Activated CD8-positive, alpha-beta memory T cell treated with anti-CD3 and anti-CD28 coated beads, Interleukin-2, amount 10 ng/mL, durations not matched to agents 7 days and 5 days (primary cell): ENCODE measurements at regions of chr1 and their contacts with region 1.

Region 1: DNA sequence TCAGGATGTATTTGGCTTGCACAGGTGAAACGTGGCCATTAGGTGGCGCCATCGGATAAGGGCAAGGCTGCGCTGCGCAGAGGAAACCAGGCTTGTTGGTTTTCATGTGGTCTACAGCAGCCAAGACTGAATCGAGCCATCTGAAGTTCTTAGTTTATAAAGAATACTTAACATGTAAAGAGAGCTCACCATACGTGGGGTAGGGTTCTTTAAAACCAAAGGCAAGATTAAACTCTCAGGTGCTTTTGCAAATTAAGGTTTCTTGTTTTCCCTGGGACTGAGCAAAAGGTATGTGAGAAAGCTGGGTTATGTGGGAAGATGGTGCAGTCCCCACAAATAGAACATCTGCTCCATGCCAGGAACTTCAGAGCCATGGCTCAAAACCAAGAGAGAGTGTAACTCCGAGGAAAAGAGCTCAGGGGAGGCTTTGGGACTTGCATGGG is 9.3 kb downstream of the MASP2 start:
- DNase-seq: peak; percentile 92
- ATAC-seq: peak; percentile 97
- H3K4me3 Mint-ChIP-seq: no peak overlapping the region
- H3K27ac Mint-ChIP-seq: no peak overlapping the region
- H3K4me1 Mint-ChIP-seq: peaks cover 9% of the 10 kb centered on the region
- H3K27me3 Mint-ChIP-seq: peaks cover 5% of the 10 kb centered on the region

Region 2: GRCh38 chr1:11052839-11053757 is 15.3 kb after region 1 on chr1:
- CTCF ChIA-PET with region 1: interaction called, 48 read pairs
- DNase-seq: no peak
- ATAC-seq: no peak
- H3K4me3 Mint-ChIP-seq: no peak overlapping the region
- H3K27ac Mint-ChIP-seq: no peak overlapping the region
- H3K4me1 Mint-ChIP-seq: peaks cover 22% of the 10 kb centered on the region
- H3K27me3 Mint-ChIP-seq: no peaks in the 10 kb centered on the region

Region 3: DNA sequence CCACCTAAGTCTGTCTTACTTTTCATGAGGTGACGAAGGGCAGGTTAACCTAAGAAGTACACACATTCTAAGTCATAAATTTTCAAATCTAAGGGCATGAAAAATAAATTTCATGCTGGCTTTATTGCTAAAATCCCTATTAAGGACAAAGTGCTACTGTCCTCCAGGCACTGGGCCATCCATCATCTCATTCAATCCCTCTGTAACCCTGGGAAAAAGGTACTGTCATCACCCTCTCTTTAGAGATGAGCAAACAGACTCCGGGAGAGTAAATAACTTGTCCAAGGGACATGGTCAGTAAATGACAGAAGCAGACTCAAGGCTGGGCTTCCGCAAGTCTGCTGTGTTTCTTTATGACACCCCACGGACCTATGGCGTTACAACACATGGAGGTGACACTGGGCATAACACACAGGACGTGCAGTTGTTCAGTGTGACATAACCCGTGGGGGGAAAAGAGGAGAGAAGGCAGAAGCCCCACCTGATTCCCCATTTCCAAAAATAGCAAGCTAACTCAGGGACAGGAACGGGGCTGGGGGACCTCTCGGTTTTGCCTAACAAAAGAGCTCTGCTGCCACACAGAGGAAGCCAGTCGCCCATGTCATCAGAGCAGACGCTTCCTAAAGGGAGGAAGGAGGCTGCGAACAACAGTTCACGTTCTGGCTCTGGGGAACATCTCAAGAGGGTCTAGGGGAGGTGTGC is 34.6 kb after region 1 on chr1:
- CTCF ChIA-PET with region 1: interaction called, 17 read pairs
- DNase-seq: no peak
- ATAC-seq: no peak
- H3K4me3 Mint-ChIP-seq: no peak overlapping the region
- H3K27ac Mint-ChIP-seq: no peak overlapping the region
- H3K4me1 Mint-ChIP-seq: peaks cover 23% of the 10 kb centered on the region
- H3K27me3 Mint-ChIP-seq: no peaks in the 10 kb centered on the region

Region 4: GRCh38 chr1:11227106-11228077 is 189.6 kb after region 1 on chr1:
- CTCF ChIA-PET with region 1: interaction called, 15 read pairs
- DNase-seq: no peak
- ATAC-seq: no peak
- H3K4me3 Mint-ChIP-seq: no peak overlapping the region
- H3K27ac Mint-ChIP-seq: peak overlapping the region; percentile 48
- H3K4me1 Mint-ChIP-seq: peaks cover 21% of the 10 kb centered on the region
- H3K27me3 Mint-ChIP-seq: no peaks in the 10 kb centered on the region

Region 5: DNA sequence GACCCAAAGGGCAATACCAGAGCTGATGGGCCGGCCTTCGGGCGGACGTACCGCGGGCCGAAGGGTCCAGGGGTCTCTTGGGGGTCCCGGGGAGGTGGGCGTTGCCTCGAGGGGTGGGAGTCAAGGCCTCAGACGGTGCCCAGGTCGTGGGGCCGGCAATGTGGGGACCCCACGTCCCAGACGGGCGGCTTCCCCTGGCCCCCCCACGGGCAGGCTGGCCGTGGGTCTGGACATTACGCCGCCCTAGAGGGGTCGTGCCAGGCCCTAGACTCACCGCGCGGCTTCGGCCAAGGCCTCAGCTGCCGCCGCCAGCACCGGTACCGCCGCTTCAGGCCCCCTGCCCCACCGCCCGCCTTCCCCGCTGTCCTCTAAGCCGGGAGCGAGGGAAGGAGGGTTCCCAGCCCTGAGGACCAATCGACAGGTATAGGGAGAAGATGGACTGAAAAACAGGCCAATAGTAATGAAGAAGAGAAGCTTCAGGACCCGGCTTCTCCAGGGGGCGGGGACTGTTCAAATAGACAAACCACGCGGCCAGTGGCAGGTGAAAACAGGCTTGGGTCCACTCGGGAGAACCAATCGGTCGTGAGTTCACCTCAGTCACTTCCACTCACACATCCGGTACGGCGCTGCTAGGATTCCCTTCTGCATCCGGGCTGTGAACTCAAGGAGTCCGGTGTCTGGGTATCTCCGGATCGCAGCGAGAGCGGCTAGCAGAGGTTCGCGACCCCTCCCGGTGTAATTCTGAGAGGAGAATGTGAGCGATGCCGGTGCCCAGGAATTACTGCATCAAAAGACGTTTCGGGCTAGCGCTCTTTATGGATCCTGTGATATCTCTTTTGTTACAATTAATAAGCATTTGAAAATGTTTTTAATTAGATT is 224.6 kb after region 1 on chr1 and contains the start of gene MTOR:
- CTCF ChIA-PET with region 1: interaction called, 16 read pairs
- DNase-seq: peak; percentile 99
- ATAC-seq: peak; percentile 98
- H3K4me3 Mint-ChIP-seq: peak within 1 kb of the TSS; percentile 89
- H3K27ac Mint-ChIP-seq: peak within 1 kb of the TSS; percentile 82
- H3K4me1 Mint-ChIP-seq: peaks cover 25% of the 10 kb centered on the region
- H3K27me3 Mint-ChIP-seq: no peaks in the 10 kb centered on the region
- total RNA-seq, gene MTOR: 50.1 to 52.0 TPM

Region 6: GRCh38 chr1:11645670-11646265 is 608.0 kb after region 1 on chr1:
- CTCF ChIA-PET with region 1: interaction called, 93 read pairs
- DNase-seq: peak; percentile 87
- ATAC-seq: peak; percentile 52
- H3K4me3 Mint-ChIP-seq: no peak overlapping the region
- H3K27ac Mint-ChIP-seq: no peak overlapping the region
- H3K4me1 Mint-ChIP-seq: peaks cover 17% of the 10 kb centered on the region
- H3K27me3 Mint-ChIP-seq: peaks cover 10% of the 10 kb centered on the region